Posterior vena cava (tissue), 2 donors: ENCODE measurements at regions of chr5 and their contacts with region 1.

Region 1: DNA sequence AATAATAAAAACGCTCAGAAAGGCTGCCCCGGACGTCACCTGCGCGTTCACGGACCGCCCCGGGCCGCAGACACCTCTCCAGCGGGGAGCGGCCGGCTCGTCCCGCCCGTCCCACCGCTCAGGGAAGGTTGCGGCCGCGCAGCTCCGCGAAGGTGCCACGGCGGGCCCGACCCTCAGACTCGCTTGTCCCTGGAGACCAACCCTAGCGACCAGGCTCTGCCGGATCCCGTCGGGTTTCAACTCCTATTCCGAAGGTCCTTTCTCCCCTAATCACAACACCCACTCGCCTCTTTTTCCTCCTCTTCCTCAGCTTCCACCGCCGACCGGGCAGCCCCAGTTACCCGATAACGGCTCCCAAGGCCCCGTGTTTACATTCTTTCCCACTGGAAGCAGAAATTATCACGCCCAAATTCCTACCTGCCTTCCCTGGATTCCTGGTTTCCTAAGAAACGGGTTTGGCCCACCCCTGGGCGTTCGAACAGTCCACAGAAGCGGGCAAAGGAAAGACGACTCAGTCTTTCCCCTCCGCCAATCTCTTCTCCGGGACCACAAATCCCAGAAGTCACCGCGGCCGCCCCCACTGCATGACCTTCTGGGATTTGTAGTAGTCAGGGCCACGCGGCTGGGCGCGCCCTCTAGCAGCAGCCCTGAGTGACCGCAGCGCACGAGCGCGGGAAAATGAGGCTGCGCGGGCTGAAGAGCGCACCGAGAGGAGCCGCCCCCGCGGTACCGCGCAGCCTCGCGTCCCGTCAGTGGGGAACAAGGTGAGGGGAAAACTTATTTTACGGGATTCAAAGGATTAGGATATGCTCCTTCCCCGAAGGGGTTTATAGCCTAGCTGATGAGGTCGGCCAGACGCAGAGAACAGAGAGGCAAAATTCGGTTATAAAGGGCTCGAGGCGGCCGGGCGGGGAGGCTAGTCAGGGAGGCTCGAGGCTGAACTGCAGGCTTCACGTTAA is at the start of gene TTC33:
- DNase-seq: peak; percentile 99
- total RNA-seq, gene TTC33: 13.3 to 18.2 TPM

Region 2: DNA sequence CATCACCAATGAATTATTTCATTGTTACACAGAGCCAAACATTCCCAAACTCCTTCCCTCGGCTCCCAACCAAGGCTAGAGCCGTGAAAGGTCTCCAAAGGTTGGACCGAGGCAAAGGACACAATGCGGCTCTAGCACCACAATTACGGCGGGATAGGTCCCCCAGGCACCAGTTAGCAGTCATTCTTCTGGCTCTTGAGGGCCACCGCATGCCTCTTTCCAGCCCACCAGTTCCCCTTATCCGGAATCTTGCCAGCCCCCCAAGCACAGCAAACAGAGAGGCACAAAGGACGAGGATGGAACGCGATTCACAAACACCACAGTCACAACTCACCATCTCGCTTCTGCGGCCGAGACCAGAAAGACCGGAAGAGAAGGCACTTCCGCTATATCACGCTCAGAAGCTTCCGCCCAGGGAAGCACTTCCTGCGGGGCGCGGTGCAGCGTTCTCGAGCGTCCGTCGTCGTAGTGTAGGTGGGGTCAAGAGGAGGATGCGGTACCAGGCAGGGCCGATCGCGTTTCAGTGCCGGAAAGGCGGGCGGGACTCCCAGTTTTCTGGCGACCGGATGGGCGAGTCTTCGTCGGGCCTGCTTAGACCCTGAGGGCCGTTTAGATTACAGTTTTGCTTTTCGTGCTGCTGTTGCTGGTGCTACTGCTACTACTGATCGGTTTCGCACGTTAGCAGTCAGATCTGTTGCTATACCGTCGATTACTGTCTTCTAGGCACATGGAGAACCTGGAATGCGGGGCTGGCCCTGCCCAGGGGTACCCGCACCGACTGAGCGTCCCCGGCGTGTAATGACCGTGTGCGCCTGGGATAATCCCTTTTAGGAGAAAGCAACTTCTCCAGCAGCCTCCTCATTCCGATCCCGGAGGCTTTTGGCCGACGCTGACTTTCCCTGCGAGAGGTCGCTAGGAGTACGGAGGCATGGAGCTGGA is 79.4 kb after region 1 on chr5 and contains the start of gene RPL37:
- intact Hi-C with region 1: loop called in 1 of 2 experiments (anchors 10 kb)
- DNase-seq: peak; percentile 99
- total RNA-seq, gene RPL37: 738 to 822 TPM

Region 3: DNA sequence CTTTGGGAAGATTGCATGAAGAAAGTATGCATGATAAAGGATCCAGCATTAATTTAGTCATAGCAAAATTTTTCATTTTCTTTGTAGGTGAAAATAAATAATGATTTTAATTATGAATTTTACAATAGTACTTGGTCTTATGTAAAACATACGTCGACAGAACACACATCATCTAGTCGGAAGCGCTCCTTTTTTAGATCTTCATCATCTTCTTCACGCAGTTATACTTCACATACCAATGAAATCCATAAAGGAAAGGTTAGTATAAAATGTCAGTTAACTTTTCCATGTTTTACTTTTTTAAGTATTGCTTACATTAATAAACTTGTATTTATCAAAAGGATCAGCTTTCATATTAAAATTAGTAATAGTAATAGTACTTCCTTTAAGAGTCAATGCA is 189.4 kb after region 1 on chr5:
- intact Hi-C with region 1: no loop called
- DNase-seq: no peak